MCF 10A (cell line): ENCODE measurements at regions of chr5 and their contacts with region 1.

Region 1: GRCh38 chr5:172283020-172283861 is at the start of gene UBTD2:
- DNase-seq: peak; percentile 88
- H3K4me3 Mint-ChIP-seq: peak within 1 kb of the TSS; percentile 95
- H3K27ac Mint-ChIP-seq: peak within 1 kb of the TSS; percentile 97
- H3K4me1 Mint-ChIP-seq: peaks cover 29% of the 10 kb centered on the region
- H3K27me3 Mint-ChIP-seq: no peaks in the 10 kb centered on the region
- CTCF ChIP-seq: peak; percentile 76
- total RNA-seq, gene UBTD2: 23.3 and 24.1 TPM in 2 replicates

Region 2: GRCh38 chr5:172106511-172107356 is 176.5 kb before region 1 on chr5:
- CTCF ChIA-PET with region 1: interaction called, 9 read pairs
- POLR2A ChIA-PET with region 1: interaction called, 24 read pairs
- intact Hi-C with region 1: loop called (anchors 2 kb)
- DNase-seq: peak; percentile 47
- H3K4me3 Mint-ChIP-seq: peak overlapping the region; percentile 46
- H3K27ac Mint-ChIP-seq: no peak overlapping the region
- H3K4me1 Mint-ChIP-seq: peaks cover 65% of the 10 kb centered on the region
- H3K27me3 Mint-ChIP-seq: no peaks in the 10 kb centered on the region
- CTCF ChIP-seq: peak; percentile 99

Region 3: DNA sequence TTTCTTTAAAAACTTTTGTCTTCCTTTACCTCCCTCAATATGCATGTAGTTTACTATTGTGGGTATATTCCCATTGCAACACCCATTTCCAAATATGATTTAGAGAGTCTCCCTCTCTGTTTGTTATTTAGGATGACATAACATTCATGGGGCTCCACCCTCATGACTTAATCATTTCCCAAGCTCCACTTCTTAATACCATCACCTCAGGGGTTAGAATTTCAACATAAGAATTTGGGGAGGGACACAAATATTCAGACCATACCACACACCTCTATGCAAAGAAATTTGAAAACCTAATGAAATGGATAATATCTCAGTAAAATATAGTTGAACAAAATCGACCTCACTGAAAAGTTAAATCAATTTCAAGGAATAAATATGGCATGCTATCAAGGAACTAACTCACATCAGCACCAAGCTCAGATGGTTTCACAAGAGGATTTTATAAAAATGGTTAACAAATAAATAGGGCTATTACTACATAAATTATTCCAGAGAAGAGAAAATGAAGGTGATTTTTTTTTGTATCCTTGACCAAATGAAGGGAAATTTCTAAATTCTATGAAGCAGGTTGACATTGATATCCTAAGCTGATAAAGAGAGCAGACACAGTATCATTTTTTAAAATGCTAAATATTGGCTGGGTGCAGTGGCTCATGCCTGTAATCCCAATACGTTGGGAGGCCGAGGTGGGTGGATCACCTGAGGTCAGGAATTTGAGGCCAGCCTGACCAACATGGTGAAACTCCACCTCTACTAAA is 20.5 kb after region 1 on chr5:
- CTCF ChIA-PET with region 1: interaction called, 11 read pairs
- POLR2A ChIA-PET with region 1: interaction called, 13 read pairs
- intact Hi-C with region 1: no loop called
- DNase-seq: peak; percentile 85
- H3K4me3 Mint-ChIP-seq: no peak overlapping the region
- H3K27ac Mint-ChIP-seq: no peak overlapping the region
- H3K4me1 Mint-ChIP-seq: peaks cover 11% of the 10 kb centered on the region
- H3K27me3 Mint-ChIP-seq: no peaks in the 10 kb centered on the region
- CTCF ChIP-seq: no peak

Region 4: DNA sequence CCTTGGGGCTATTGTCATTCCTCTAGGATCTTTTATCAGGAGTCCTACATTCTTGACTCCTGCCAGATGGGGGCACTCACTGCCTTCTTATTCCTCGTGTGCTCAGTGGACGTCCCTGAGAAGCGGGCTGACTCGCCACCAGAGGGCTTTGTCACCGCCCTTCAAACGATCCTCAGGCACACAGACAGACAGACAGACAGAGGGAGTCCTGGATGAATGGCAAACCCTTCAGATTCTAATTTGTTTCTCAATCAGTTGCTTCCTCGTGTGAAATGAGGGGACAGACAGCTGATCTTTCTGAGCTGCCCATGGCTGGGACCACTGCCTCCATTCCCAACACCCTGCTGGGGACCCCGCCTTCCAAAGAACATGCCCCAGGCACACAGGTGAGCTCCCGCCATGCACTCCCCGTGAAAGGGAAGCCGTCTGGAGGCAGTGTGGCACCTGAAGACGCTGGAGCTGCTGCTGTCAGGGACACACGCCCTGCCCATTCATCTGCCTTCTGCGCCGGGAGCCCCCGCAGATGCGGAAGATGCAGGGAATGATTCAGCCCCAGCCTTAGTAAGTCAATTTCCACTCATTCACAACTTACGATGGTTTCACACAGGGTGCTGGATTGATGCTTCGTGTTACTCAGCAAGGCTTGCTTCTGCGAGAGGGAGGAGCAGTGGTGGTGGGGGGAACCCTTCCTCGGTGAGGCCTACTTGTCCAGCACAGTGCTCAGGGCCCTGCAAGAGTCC is 196.0 kb after region 1 on chr5:
- CTCF ChIA-PET with region 1: no interaction called
- POLR2A ChIA-PET with region 1: no interaction called
- intact Hi-C with region 1: no loop called
- DNase-seq: peak; percentile 98
- H3K4me3 Mint-ChIP-seq: no peak overlapping the region
- H3K27ac Mint-ChIP-seq: no peak overlapping the region
- H3K4me1 Mint-ChIP-seq: peaks cover 25% of the 10 kb centered on the region
- H3K27me3 Mint-ChIP-seq: no peaks in the 10 kb centered on the region
- CTCF ChIP-seq: peak; percentile 92